CD8-positive, alpha-beta T cell (primary cell): ENCODE measurements at regions of chr20 and their contacts with region 1.

Region 1: DNA sequence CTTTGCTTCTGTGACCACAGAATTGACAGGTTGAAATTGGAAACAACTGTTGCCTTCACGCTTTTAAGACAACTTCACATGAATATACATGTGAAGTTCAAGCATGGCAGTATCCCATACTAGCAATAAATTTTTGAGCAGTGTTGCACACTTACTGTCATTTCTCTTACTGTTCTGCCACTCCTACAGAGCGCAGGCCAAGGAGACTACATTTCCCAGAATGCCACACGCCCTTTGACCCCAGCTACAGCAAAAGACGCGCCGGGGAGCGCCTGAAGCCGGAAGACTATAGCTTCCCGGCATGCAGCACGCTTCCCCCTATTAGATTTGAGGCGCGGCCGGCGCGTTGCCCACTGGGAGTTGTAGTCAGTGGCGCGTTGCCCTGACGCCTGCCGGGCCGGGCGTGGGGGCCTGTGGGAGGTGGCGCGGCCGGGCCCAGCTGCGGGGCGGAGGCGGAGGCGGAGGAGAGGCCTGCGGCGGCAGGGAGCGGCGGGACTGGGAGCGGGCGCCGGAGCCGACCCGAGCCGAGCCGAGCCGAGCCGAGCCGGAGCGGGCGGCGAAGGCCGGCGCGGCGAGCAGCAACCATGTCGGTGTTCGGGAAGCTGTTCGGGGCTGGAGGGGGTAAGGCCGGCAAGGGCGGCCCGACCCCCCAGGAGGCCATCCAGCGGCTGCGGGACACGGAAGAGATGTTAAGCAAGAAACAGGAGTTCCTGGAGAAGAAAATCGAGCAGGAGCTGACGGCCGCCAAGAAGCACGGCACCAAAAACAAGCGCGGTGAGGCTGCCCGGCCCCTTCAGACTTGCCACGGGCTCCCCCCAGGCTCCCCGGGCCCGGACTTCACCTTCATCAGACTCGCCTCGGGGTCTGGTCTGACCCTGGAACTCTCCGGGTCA is at the start of gene CHMP4B:
- DNase-seq: peak; percentile 97 to 99 (median 99)
- ATAC-seq: peak; percentile 97
- H3K4me3 ChIP-seq: peak within 1 kb of the TSS; percentile 77
- H3K4me3 Mint-ChIP-seq: peak within 1 kb of the TSS; percentile 99
- H3K27ac ChIP-seq: peak within 1 kb of the TSS; percentile 58 to 73
- H3K27ac Mint-ChIP-seq: peak within 1 kb of the TSS; percentile 93
- H3K4me1 ChIP-seq: peaks cover 40% of the 10 kb centered on the region
- H3K4me1 Mint-ChIP-seq: peaks cover 47% of the 10 kb centered on the region
- H3K27me3 ChIP-seq: no peaks in the 10 kb centered on the region
- H3K27me3 Mint-ChIP-seq: no peaks in the 10 kb centered on the region
- CTCF ChIP-seq: no peak
- total RNA-seq, gene CHMP4B: 55.5 to 56.1 TPM

Region 2: GRCh38 chr20:33401184-33401920 is 409.8 kb before region 1 on chr20 and contains the start of gene CDK5RAP1:
- CTCF ChIA-PET with region 1: no interaction called
- POLR2A ChIA-PET with region 1: no interaction called
- intact Hi-C with region 1: loop called in 1 of 2 experiments (anchors 1 kb)
- DNase-seq: peak; percentile 71 to 93 (median 85)
- ATAC-seq: peak; percentile 96
- H3K4me3 ChIP-seq: peak within 1 kb of the TSS; percentile 66 to 67
- H3K4me3 Mint-ChIP-seq: peak within 1 kb of the TSS; percentile 97
- H3K27ac ChIP-seq: peak within 1 kb of the TSS; percentile 56 to 64
- H3K27ac Mint-ChIP-seq: peak within 1 kb of the TSS; percentile 93
- H3K4me1 ChIP-seq: peaks cover 26% of the 10 kb centered on the region
- H3K4me1 Mint-ChIP-seq: peaks cover 55% of the 10 kb centered on the region
- H3K27me3 ChIP-seq: no peaks in the 10 kb centered on the region
- H3K27me3 Mint-ChIP-seq: no peaks in the 10 kb centered on the region
- CTCF ChIP-seq: no peak
- total RNA-seq, gene CDK5RAP1: 60.7 to 69.9 TPM

Region 3: GRCh38 chr20:33554914-33555420 is 256.2 kb before region 1 on chr20:
- CTCF ChIA-PET with region 1: no interaction called
- POLR2A ChIA-PET with region 1: no interaction called
- intact Hi-C with region 1: loop called in 1 of 2 experiments (anchors 5 kb)
- DNase-seq: peak in 6 of 9 experiments; percentile 3 to 95 (median 43)
- ATAC-seq: peak; percentile 95
- H3K4me3 ChIP-seq: peak overlapping the region; percentile 11 to 24
- H3K4me3 Mint-ChIP-seq: peak overlapping the region; percentile 72
- H3K27ac ChIP-seq: peak overlapping the region; percentile 62 to 92
- H3K27ac Mint-ChIP-seq: peak overlapping the region; percentile 96
- H3K4me1 ChIP-seq: peaks cover 14% of the 10 kb centered on the region
- H3K4me1 Mint-ChIP-seq: peaks cover 28% of the 10 kb centered on the region
- H3K27me3 ChIP-seq: no peaks in the 10 kb centered on the region
- H3K27me3 Mint-ChIP-seq: no peaks in the 10 kb centered on the region
- CTCF ChIP-seq: no peak

Region 4: GRCh38 chr20:33731693-33732165 is 79.4 kb before region 1 on chr20 and contains the start of gene ZNF341:
- CTCF ChIA-PET with region 1: no interaction called
- POLR2A ChIA-PET with region 1: interaction called, 11 read pairs
- intact Hi-C with region 1: loop called (anchors 1 kb)
- DNase-seq: peak; percentile 81 to 95 (median 89)
- ATAC-seq: peak; percentile 85
- H3K4me3 ChIP-seq: peak within 1 kb of the TSS; percentile 67 to 79
- H3K4me3 Mint-ChIP-seq: peak within 1 kb of the TSS; percentile 88
- H3K27ac ChIP-seq: peak within 1 kb of the TSS; percentile 60 to 81
- H3K27ac Mint-ChIP-seq: peak within 1 kb of the TSS; percentile 92
- H3K4me1 ChIP-seq: peaks cover 12% of the 10 kb centered on the region
- H3K4me1 Mint-ChIP-seq: peaks cover 20% of the 10 kb centered on the region
- H3K27me3 ChIP-seq: no peaks in the 10 kb centered on the region
- H3K27me3 Mint-ChIP-seq: no peaks in the 10 kb centered on the region
- CTCF ChIP-seq: peak; percentile 67
- total RNA-seq, gene ZNF341: 2.4 to 2.9 TPM

Region 5: DNA sequence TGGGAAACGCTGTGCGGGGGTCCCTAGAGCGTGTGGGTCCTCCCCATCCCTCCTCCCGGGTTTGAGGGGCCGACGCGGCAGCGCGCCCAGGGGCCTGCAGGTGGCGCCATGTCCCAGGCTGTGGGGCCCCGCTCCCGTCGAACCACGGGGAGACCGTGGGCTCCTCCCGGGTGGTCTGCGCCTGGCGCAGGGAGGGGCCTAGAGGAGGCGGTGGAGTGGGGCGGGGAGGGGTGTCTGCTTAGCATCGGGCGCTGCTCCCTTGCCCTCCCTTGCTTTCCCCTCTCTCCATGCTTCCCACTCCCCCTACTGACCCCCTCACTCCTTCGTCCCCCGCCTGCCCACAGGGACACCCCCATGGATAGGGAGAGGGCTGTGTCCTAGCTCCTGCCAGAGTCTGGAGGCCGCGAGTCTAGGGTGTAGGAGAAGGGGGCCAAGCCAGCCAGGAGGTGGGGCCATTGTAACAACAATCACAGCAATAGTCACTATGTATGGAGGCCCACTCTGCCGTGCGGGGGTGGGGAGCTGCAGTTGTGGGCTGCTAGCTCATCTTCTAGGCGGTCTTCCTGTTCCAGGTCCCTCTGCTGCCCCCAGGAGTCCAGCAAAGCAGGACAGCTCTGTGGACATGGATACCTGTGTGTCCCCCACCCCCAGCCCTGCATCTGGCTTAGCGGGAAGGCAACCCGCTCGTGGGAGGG is 51.7 kb after region 1 on chr20:
- CTCF ChIA-PET with region 1: interaction called, 4 read pairs
- POLR2A ChIA-PET with region 1: interaction called, 10 read pairs
- intact Hi-C with region 1: loop called in 1 of 2 experiments (anchors 2 kb)
- DNase-seq: peak in 8 of 9 experiments; percentile 25 to 63 (median 54)
- ATAC-seq: peak; percentile 54
- H3K4me3 ChIP-seq: no peak overlapping the region
- H3K4me3 Mint-ChIP-seq: no peak overlapping the region
- H3K27ac ChIP-seq: no peak overlapping the region
- H3K27ac Mint-ChIP-seq: no peak overlapping the region
- H3K4me1 ChIP-seq: peaks cover 28% of the 10 kb centered on the region
- H3K4me1 Mint-ChIP-seq: peaks cover 23% of the 10 kb centered on the region
- H3K27me3 ChIP-seq: no peaks in the 10 kb centered on the region
- H3K27me3 Mint-ChIP-seq: no peaks in the 10 kb centered on the region
- CTCF ChIP-seq: peak; percentile 70

Region 6: GRCh38 chr20:34111702-34112599 is 300.8 kb after region 1 on chr20 and contains the start of gene EIF2S2:
- CTCF ChIA-PET with region 1: interaction called, 4 read pairs
- POLR2A ChIA-PET with region 1: interaction called, 14 read pairs
- intact Hi-C with region 1: loop called (anchors 1 kb)
- DNase-seq: peak; percentile 91 to 99 (median 95)
- ATAC-seq: peak; percentile 89
- H3K4me3 ChIP-seq: peak within 1 kb of the TSS; percentile 81 to 86
- H3K4me3 Mint-ChIP-seq: peak within 1 kb of the TSS; percentile 96
- H3K27ac ChIP-seq: peak within 1 kb of the TSS; percentile 89 to 93
- H3K27ac Mint-ChIP-seq: peak within 1 kb of the TSS; percentile 98
- H3K4me1 ChIP-seq: peaks cover 34% of the 10 kb centered on the region
- H3K4me1 Mint-ChIP-seq: peaks cover 42% of the 10 kb centered on the region
- H3K27me3 ChIP-seq: no peaks in the 10 kb centered on the region
- H3K27me3 Mint-ChIP-seq: no peaks in the 10 kb centered on the region
- CTCF ChIP-seq: no peak
- total RNA-seq, gene EIF2S2: 19.4 to 19.6 TPM

Region 7: DNA sequence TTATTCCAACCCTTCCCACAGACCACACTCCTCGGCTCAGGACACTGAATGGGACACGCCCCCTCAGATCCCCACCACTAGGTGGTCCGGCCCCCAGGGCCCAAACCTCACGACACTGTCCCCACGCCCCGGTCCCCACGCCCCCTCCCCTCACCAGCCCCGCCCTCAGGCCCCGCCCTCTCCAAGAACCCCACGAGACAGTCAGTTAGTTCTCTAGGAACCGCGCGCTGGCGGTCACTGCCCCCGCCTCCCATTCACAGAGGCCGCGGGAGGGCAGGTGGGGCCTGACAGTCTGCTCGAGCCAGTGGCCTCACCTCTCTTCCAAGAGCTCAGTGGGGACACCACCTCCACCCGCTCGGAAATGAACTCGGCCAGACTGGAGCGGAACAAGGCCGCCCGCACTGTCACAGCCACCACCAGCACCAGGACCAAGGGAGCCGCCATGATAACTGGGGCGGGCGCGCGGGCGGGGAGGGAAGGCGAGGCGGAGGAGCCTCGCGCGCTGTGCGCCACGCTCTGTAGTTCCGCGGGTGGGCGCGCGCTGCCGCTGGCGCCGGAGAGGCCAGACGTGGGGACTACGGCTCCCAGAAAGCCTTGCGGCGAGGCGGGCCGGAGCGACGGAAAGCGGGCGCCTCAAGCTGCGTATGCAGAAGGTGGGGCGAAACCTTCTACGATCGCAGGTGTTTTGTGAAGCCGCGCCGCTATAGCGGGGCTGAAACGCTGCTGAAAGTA is 865.7 kb after region 1 on chr20 and contains the start of gene PIGU:
- CTCF ChIA-PET with region 1: no interaction called
- POLR2A ChIA-PET with region 1: no interaction called
- intact Hi-C with region 1: loop called in 1 of 2 experiments (anchors 2 kb)
- DNase-seq: peak; percentile 92 to 98 (median 96)
- ATAC-seq: peak; percentile 96
- H3K4me3 ChIP-seq: peak within 1 kb of the TSS; percentile 80 to 94
- H3K4me3 Mint-ChIP-seq: peak within 1 kb of the TSS; percentile 97
- H3K27ac ChIP-seq: peak within 1 kb of the TSS; percentile 83 to 90
- H3K27ac Mint-ChIP-seq: peak within 1 kb of the TSS; percentile 96
- H3K4me1 ChIP-seq: peaks cover 16% of the 10 kb centered on the region
- H3K4me1 Mint-ChIP-seq: peaks cover 22% of the 10 kb centered on the region
- H3K27me3 ChIP-seq: no peaks in the 10 kb centered on the region
- H3K27me3 Mint-ChIP-seq: no peaks in the 10 kb centered on the region
- CTCF ChIP-seq: no peak
- total RNA-seq, gene PIGU: 3.3 to 5.2 TPM